ENCODE measurements at regions of chr10 and their contacts with region 1.

Region 1: GRCh38 chr10:44974628-44975431 is 3.8 kb downstream of the DEPP1 start:
- DNase-seq: peak; percentile 79
- ATAC-seq: peak; percentile 58
- H3K4me3 ChIP-seq: peak overlapping the region in 2 of 3 experiments; percentile 21 to 52; a peak in 2 of 6 replicates
- H3K27ac ChIP-seq: peak overlapping the region; percentile 53
- H3K4me1 ChIP-seq: peaks cover 47% of the 10 kb centered on the region
- H3K27me3 ChIP-seq: no peaks in the 10 kb centered on the region; a peak in 1 of 5 replicates
- CTCF ChIP-seq: peak; percentile 84
- EP300 ChIP-seq: peak in 1 of 2 experiments; percentile 33; a peak in 1 of 4 replicates
- POLR2A ChIP-seq: peak in 1 of 2 experiments; percentile 27; a peak in 1 of 4 replicates
- RAD21 ChIP-seq: peak; percentile 97

Region 2: DNA sequence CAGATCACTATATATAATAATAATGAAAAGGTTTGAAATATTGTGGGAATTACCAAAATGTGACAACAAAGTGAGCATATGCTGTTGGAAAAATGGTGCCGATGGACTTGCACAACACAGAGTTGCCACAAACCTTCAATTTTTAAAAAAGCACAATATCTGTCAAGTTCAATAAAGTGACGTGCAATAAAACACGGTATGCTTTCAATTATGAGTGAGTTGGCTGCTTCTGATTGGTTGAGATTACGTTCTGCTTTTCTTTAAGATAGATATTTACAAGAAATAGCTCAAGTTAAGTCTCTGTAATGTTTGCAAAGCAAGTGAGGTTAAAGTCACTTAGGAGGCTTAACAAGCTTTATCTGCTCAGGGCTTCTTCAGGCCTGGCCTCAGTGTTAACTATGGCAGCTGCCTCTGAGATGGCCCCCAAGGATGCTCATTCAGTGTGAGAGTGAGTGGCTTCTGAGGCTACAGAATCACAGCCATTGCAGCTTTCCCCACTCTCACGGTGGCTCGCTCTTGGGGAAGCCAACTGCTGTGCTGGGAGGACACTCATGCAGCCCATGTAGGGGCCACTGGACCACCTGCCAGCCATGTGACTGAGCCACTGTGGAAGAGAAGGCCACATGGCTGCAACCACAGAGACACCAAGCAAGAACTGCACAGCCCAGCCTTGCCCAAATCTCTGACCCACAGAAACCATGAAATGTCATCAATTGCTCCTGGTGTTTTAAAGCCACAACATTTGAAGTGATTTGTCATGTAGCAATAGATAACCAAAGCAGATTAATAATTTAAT is 142.0 kb before region 1 on chr10:
- CTCF ChIA-PET with region 1: no interaction called
- POLR2A ChIA-PET with region 1: no interaction called
- in situ Hi-C with region 1: no loop called
- intact Hi-C with region 1: no loop called
- DNase-seq: no peak
- ATAC-seq: no peak
- H3K4me3 ChIP-seq: no peak overlapping the region
- H3K27ac ChIP-seq: no peak overlapping the region
- H3K4me1 ChIP-seq: 0 out of 2 replicates have a peak, but pooled peaks cover 2% of the 10 kb centered on the region
- H3K27me3 ChIP-seq: no peaks in the 10 kb centered on the region; a peak in 1 of 5 replicates
- CTCF ChIP-seq: no peak
- EP300 ChIP-seq: no peak
- POLR2A ChIP-seq: no peak
- RAD21 ChIP-seq: no peak

Region 3: GRCh38 chr10:44932517-44933450 is 42.0 kb before region 1 on chr10:
- CTCF ChIA-PET with region 1: interaction called, 64 read pairs
- POLR2A ChIA-PET with region 1: interaction called, 215 read pairs
- in situ Hi-C with region 1: loop called (anchors 5 kb)
- intact Hi-C with region 1: loop called (anchors 1 kb)
- DNase-seq: peak; percentile 76
- ATAC-seq: peak; percentile 92
- H3K4me3 ChIP-seq: peak overlapping the region in 1 of 3 experiments; percentile 45; a peak in 2 of 6 replicates
- H3K27ac ChIP-seq: no peak overlapping the region
- H3K4me1 ChIP-seq: peaks cover 71% of the 10 kb centered on the region
- H3K27me3 ChIP-seq: no peaks in the 10 kb centered on the region
- CTCF ChIP-seq: peak; percentile 100
- EP300 ChIP-seq: no peak
- POLR2A ChIP-seq: no peak
- RAD21 ChIP-seq: peak; percentile 99

Region 4: GRCh38 chr10:44947371-44948152 is 27.3 kb before region 1 on chr10:
- CTCF ChIA-PET with region 1: interaction called, 5 read pairs
- POLR2A ChIA-PET with region 1: interaction called, 20 read pairs
- in situ Hi-C with region 1: no loop called
- intact Hi-C with region 1: no loop called
- DNase-seq: no peak
- ATAC-seq: no peak
- H3K4me3 ChIP-seq: no peak overlapping the region
- H3K27ac ChIP-seq: no peak overlapping the region
- H3K4me1 ChIP-seq: peaks cover 75% of the 10 kb centered on the region
- H3K27me3 ChIP-seq: no peaks in the 10 kb centered on the region
- CTCF ChIP-seq: no peak
- EP300 ChIP-seq: no peak
- POLR2A ChIP-seq: no peak
- RAD21 ChIP-seq: no peak

Region 5: DNA sequence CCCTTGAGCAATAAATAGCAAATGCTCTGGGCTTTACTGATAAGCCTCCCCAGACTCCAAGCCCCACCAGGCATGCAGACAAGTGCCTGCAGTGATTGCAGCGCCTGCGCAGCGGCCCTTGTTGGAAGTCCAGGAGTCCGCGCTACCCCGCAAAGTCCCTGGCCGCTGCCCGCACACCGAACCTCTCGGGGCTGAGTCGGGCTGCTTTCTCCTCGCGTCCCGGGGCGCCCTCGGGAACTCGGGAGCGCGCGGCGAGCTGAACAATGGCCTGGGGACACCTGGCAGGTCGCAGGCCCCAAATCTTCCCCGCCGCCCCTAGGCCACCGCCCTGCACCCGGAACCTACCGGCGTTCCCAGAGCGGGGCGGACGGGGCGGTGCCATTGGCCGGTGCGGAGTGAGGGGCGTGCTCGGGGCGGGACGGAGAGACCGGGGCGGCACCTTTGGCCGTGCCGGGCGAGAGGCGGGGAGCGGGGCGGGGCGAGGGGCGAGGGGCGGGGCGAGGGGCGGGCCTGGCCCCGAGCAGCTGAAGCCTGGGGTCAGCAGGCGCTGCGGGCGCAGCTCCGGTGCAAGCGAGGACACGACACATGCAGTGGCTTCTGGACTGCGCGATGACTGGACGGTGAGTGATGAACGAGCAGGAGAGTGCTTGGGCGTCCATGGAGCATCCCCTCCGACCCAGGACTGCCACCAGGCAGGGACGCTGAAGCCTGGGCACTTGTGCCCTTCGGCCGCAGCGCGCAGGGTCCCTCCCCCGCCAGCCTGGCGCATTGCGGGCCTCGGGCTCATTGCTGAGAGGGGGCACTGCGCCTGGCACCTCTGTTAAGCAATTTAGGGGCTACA is 15.4 kb before region 1 on chr10 and contains the start of gene RASSF4:
- CTCF ChIA-PET with region 1: interaction called, 4 read pairs
- POLR2A ChIA-PET with region 1: interaction called, 407 read pairs
- in situ Hi-C with region 1: no loop called
- intact Hi-C with region 1: loop called (anchors 2 kb)
- DNase-seq: peak; percentile 81
- ATAC-seq: peak; percentile 89
- H3K4me3 ChIP-seq: peak within 1 kb of the TSS; percentile 82 to 85 (median 84)
- H3K27ac ChIP-seq: peak within 1 kb of the TSS; percentile 90
- H3K4me1 ChIP-seq: peaks cover 65% of the 10 kb centered on the region
- H3K27me3 ChIP-seq: no peaks in the 10 kb centered on the region; a peak in 1 of 5 replicates
- CTCF ChIP-seq: no peak
- EP300 ChIP-seq: peak in 1 of 2 experiments; percentile 7; a peak in 1 of 4 replicates
- POLR2A ChIP-seq: peak; percentile 75 to 94
- RAD21 ChIP-seq: peak; percentile 55
- total RNA-seq, gene RASSF4: 49.9 and 51.7 TPM in 2 replicates

Region 6: DNA sequence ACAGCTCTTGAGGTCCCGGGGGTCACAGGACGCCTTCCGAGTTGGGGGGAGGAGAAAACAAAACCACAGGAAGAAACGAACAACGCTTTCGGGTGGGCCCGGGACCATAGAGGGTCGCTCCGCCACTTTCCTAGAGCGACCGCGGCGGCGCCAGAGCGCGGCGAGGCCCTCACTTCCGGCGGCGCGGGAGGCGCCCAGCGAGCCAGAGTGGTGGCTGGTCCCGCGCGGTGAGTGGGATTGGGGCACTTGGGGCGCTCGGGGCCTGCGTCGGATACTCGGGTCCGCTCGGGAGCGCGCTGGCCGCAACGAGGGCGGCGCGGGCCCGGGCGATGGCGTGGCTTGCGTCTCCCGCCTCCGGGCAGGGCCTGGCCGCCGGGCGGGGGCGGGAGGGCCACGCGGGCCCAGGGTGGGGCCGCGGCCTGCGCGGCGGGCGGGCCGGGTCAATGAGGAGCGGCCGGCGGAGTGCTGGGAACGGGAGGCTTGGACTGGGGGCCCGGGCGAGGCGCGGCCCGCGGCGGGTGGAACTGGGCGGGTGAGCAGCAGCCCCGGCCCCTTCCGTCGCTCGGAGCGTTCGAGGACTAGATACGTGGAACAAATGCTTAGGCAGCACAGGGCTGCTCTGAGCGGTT is 26.0 kb after region 1 on chr10 and contains the start of gene ZNF22:
- CTCF ChIA-PET with region 1: no interaction called
- POLR2A ChIA-PET with region 1: interaction called, 863 read pairs
- in situ Hi-C with region 1: no loop called
- intact Hi-C with region 1: no loop called
- DNase-seq: no peak
- ATAC-seq: no peak
- H3K4me3 ChIP-seq: no peak within 1 kb of the TSS
- H3K27ac ChIP-seq: peak within 1 kb of the TSS; percentile 31
- H3K4me1 ChIP-seq: peaks cover 95% of the 10 kb centered on the region
- H3K27me3 ChIP-seq: no peaks in the 10 kb centered on the region
- CTCF ChIP-seq: no peak
- EP300 ChIP-seq: no peak
- POLR2A ChIP-seq: no peak
- RAD21 ChIP-seq: no peak
- total RNA-seq, gene ZNF22: 0.40 and 0.58 TPM in 2 replicates

Measured in HepG2 (cell line).